SK-N-SH (cell line): ENCODE measurements at regions of chrX and their contacts with region 1.

Region 1: GRCh38 chrX:153667956-153668396 is 5.6 kb downstream of the PNCK start:
- DNase-seq: peak; percentile 87
- H3K4me3 ChIP-seq: peak overlapping the region in 1 of 2 experiments; percentile 35; a peak in 1 of 4 replicates
- H3K27ac ChIP-seq: no peak overlapping the region
- H3K4me1 ChIP-seq: peaks cover 0 to 3% of the 10 kb centered on the region in 2 experiments; a peak in 1 of 4 replicates
- H3K27me3 ChIP-seq: no peaks in the 10 kb centered on the region; the same call in 1 of the 2 replicates
- CTCF ChIP-seq: peak; percentile 79
- EP300 ChIP-seq: no peak
- RAD21 ChIP-seq: peak; percentile 77

Region 2: GRCh38 chrX:153539171-153539978 is 128.6 kb before region 1 on chrX:
- CTCF ChIA-PET with region 1: interaction called, 41 read pairs
- POLR2A ChIA-PET with region 1: no interaction called
- DNase-seq: peak; percentile 88
- H3K4me3 ChIP-seq: peak overlapping the region in 1 of 2 experiments; percentile 37; a peak in 1 of 4 replicates
- H3K27ac ChIP-seq: peak overlapping the region in 1 of 2 experiments; percentile 95; a peak in 2 of 4 replicates
- H3K4me1 ChIP-seq: peaks cover 0 to 59% of the 10 kb centered on the region in 2 experiments; a peak in 1 of 4 replicates
- H3K27me3 ChIP-seq: peaks cover 41% of the 10 kb centered on the region
- CTCF ChIP-seq: peak; percentile 91
- EP300 ChIP-seq: no peak
- RAD21 ChIP-seq: peak; percentile 77

Region 3: GRCh38 chrX:153560000-153560399 is 108.0 kb before region 1 on chrX:
- CTCF ChIA-PET with region 1: interaction called, 92 read pairs
- POLR2A ChIA-PET with region 1: interaction called, 3 read pairs
- DNase-seq: no peak
- H3K4me3 ChIP-seq: no peak overlapping the region
- H3K27ac ChIP-seq: no peak overlapping the region
- H3K4me1 ChIP-seq: no peaks in the 10 kb centered on the region
- H3K27me3 ChIP-seq: peaks cover 79% of the 10 kb centered on the region
- CTCF ChIP-seq: no peak
- EP300 ChIP-seq: no peak
- RAD21 ChIP-seq: no peak

Region 4: DNA sequence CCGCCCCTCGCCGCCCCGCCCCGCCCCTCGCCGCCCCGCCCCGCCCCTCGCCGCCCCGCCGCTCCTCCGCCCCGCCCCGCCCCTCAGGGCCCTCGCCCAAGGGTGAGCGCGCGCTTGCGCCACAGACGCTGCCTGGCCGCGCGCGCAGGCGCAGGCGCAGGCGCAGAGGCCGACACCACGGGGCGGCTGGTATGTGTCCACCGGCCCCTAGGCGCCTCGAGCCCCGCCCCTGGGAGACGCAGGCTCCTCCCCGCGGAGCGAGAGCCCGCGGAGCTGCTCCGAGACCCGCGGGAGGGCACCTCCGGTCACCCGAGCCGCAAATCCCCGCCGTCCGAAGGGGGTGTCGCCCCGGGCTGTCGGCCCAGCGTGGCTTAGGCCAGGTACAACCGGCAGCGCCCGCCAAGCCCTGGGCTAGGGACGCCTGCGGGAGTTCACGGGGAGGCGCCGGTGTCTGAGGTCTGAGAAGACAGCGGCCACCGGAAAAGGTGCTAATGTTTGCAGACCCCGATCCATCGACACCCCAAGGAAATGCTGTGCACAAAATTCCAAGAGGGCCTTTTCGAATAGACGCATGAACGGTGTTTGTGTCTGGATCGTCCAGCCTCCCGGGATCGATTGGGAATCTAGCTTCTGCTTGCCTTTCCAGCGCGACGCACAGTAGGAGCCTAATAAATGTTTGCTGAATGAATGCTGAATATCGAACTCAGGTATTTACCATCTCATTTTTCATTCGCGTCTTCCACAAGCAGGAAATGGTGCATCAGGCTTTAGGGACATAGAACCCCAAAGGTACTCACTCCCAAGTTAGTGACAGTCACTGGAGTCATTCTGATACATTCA is 68.6 kb before region 1 on chrX:
- CTCF ChIA-PET with region 1: interaction called, 128 read pairs
- POLR2A ChIA-PET with region 1: no interaction called
- DNase-seq: peak; percentile 95
- H3K4me3 ChIP-seq: peak overlapping the region; percentile 63 to 69
- H3K27ac ChIP-seq: peak overlapping the region in 1 of 2 experiments; percentile 16; a peak in 1 of 4 replicates
- H3K4me1 ChIP-seq: peaks cover 0 to 9% of the 10 kb centered on the region in 2 experiments; a peak in 1 of 4 replicates
- H3K27me3 ChIP-seq: peaks cover 19% of the 10 kb centered on the region
- CTCF ChIP-seq: no peak
- EP300 ChIP-seq: no peak
- RAD21 ChIP-seq: no peak

Region 5: GRCh38 chrX:153636623-153637115 is 31.3 kb before region 1 on chrX:
- CTCF ChIA-PET with region 1: interaction called, 15 read pairs
- POLR2A ChIA-PET with region 1: no interaction called
- DNase-seq: peak; percentile 12
- H3K4me3 ChIP-seq: no peak overlapping the region
- H3K27ac ChIP-seq: no peak overlapping the region
- H3K4me1 ChIP-seq: peaks cover 0 to 22% of the 10 kb centered on the region in 2 experiments; a peak in 1 of 4 replicates
- H3K27me3 ChIP-seq: peaks cover 50% of the 10 kb centered on the region
- CTCF ChIP-seq: 0 out of 2 replicates have a peak, but pooled peaks have one; percentile 5
- EP300 ChIP-seq: no peak
- RAD21 ChIP-seq: no peak

Region 6: DNA sequence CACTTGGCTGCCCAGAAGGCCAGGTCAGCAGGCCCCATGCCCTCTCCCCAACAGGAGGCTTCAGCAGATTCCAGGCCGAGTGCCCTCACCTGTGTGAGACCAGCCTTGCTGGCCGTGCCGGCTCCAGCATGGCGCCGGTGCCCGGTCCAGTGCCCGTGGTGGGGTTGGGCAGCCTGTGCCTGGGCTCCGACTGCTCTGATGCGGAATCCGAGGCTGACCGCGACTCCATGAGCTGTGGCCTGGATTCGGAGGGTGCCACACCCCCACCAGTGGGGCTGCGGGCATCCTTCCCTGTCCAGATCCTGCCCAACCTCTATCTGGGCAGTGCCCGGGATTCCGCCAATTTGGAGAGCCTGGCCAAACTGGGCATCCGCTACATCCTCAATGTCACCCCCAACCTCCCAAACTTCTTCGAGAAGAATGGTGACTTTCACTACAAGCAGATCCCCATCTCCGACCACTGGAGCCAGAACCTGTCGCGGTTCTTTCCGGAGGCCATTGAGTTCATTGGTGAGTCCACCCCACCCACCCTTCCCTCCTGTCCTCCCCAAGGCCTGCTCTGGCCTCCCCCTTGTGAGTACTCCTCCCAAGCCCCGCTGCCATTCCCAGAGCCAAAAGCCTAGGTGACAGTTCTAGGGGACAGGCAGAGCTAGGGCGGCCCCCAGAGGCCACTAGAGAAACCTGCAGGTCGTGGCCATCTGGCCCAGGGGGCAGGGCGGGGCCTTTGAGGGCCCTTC is 18.6 kb before region 1 on chrX:
- CTCF ChIA-PET with region 1: interaction called, 106 read pairs
- POLR2A ChIA-PET with region 1: no interaction called
- DNase-seq: peak; percentile 84
- H3K4me3 ChIP-seq: no peak overlapping the region
- H3K27ac ChIP-seq: no peak overlapping the region
- H3K4me1 ChIP-seq: peaks cover 0 to 3% of the 10 kb centered on the region in 2 experiments; a peak in 1 of 4 replicates
- H3K27me3 ChIP-seq: peaks cover 37% of the 10 kb centered on the region
- CTCF ChIP-seq: peak; percentile 46
- EP300 ChIP-seq: no peak
- RAD21 ChIP-seq: peak; percentile 66

Region 7: GRCh38 chrX:153687121-153688039 is 19.4 kb after region 1 on chrX and contains the start of gene SLC6A8:
- CTCF ChIA-PET with region 1: interaction called, 33 read pairs
- POLR2A ChIA-PET with region 1: interaction called, 3 read pairs
- DNase-seq: peak; percentile 87
- H3K4me3 ChIP-seq: peak within 1 kb of the TSS in 1 of 2 experiments; percentile 56; a peak in 2 of 4 replicates
- H3K27ac ChIP-seq: peak within 1 kb of the TSS in 1 of 2 experiments; percentile 69; a peak in 2 of 4 replicates
- H3K4me1 ChIP-seq: peaks cover 0 to 43% of the 10 kb centered on the region in 2 experiments; a peak in 1 of 4 replicates
- H3K27me3 ChIP-seq: peaks cover 7% of the 10 kb centered on the region; the same call in 1 of the 2 replicates
- CTCF ChIP-seq: peak; percentile 30
- EP300 ChIP-seq: no peak
- RAD21 ChIP-seq: peak; percentile 30; the same call in 1 of the 2 replicates
- polyA plus RNA-seq, gene SLC6A8: 22.3 and 30.8 TPM in 2 replicates

Region 8: GRCh38 chrX:153697924-153698865 is 30.2 kb after region 1 on chrX:
- CTCF ChIA-PET with region 1: no interaction called
- POLR2A ChIA-PET with region 1: no interaction called
- DNase-seq: no peak
- H3K4me3 ChIP-seq: no peak overlapping the region
- H3K27ac ChIP-seq: no peak overlapping the region
- H3K4me1 ChIP-seq: peaks cover 0 to 5% of the 10 kb centered on the region in 2 experiments; a peak in 1 of 4 replicates
- H3K27me3 ChIP-seq: peaks cover 9% of the 10 kb centered on the region; the same call in 1 of the 2 replicates
- CTCF ChIP-seq: no peak
- EP300 ChIP-seq: no peak
- RAD21 ChIP-seq: no peak

Region 9: GRCh38 chrX:154046031-154046781 is 378.2 kb after region 1 on chrX:
- CTCF ChIA-PET with region 1: no interaction called
- POLR2A ChIA-PET with region 1: no interaction called
- DNase-seq: no peak
- H3K4me3 ChIP-seq: no peak overlapping the region
- H3K27ac ChIP-seq: peak overlapping the region; percentile 75 to 90; a peak in 3 of 4 replicates
- H3K4me1 ChIP-seq: peaks cover 17 to 26% of the 10 kb centered on the region in 2 experiments; a peak in 3 of 4 replicates
- H3K27me3 ChIP-seq: no peaks in the 10 kb centered on the region; the same call in 1 of the 2 replicates
- CTCF ChIP-seq: peak; percentile 31; the same call in 1 of the 2 replicates
- EP300 ChIP-seq: no peak
- RAD21 ChIP-seq: no peak; the same call in 1 of the 2 replicates